BJ (cell line): ENCODE measurements at regions of chr22 and their contacts with region 1.

Region 1: GRCh38 chr22:41746567-41747400 is 47.5 kb downstream of the MEI1 start:
- DNase-seq: peak; percentile 38
- H3K4me3 ChIP-seq: no peak overlapping the region
- H3K27me3 ChIP-seq: peaks cover 16% of the 10 kb centered on the region
- CTCF ChIP-seq: peak; percentile 90

Region 2: DNA sequence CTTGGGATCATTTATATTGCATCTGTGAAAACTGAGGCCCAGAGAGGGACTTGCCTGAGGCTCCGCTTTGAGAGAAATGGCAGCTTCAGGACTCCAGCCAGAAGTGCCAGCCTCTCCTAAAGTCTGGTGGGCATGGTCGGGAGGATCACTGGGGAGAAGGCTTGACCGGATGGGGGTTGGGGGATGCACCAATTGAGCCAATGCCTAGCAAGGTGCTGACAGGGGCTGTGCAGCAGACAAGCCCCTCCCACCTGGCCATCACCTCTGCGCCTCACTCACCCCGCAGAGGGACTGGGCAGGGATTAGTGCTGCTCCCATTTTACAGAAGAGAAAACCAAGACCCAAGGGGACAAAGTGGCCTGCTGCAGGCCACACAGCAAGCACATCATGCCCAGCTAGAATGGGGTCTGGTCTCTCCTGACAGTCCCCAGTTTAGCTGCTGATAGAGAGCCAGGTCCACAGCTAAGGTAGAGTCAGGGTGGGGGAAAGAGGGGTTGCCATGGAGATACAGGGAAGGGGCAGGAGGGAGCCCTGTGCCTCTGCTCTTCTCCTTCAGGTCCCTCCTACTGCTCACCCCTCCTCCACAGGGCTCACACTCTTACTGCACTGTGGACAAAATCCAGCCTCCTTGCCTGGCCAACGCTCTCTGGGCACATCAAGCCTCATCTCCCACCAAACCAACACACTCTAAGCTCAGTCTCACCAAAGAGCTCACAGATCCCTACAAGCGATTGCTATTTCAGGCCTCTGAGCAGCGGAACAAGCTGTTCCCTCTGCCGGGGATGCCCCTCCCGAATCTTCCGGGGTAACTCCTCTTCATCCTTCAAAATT is 335.5 kb before region 1 on chr22:
- CTCF ChIA-PET with region 1: no interaction called
- POLR2A ChIA-PET with region 1: no interaction called
- DNase-seq: no peak
- H3K4me3 ChIP-seq: no peak overlapping the region
- H3K27me3 ChIP-seq: no peaks in the 10 kb centered on the region
- CTCF ChIP-seq: no peak

Region 3: DNA sequence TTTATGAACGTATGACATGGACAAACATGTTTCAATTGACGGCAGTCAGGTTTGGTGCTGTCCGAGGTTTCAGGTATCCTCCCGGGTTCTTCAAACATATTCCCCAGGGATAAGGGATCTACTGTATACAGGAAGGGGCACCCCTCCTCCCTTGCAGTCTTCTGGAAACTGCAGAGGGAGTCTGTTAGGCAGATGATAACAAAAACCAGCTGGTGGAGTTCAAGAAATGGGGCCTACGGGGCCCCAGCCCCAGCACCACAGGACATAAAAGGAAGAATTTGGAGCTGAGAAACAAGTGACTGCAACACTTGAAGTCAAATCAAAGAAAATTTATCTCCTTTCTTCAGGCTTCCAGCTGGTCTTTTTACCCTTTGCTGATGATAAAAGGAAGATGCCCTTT is 90.2 kb before region 1 on chr22:
- CTCF ChIA-PET with region 1: no interaction called
- POLR2A ChIA-PET with region 1: no interaction called
- DNase-seq: no peak
- H3K4me3 ChIP-seq: no peak overlapping the region
- H3K27me3 ChIP-seq: no peaks in the 10 kb centered on the region
- CTCF ChIP-seq: no peak

Region 4: DNA sequence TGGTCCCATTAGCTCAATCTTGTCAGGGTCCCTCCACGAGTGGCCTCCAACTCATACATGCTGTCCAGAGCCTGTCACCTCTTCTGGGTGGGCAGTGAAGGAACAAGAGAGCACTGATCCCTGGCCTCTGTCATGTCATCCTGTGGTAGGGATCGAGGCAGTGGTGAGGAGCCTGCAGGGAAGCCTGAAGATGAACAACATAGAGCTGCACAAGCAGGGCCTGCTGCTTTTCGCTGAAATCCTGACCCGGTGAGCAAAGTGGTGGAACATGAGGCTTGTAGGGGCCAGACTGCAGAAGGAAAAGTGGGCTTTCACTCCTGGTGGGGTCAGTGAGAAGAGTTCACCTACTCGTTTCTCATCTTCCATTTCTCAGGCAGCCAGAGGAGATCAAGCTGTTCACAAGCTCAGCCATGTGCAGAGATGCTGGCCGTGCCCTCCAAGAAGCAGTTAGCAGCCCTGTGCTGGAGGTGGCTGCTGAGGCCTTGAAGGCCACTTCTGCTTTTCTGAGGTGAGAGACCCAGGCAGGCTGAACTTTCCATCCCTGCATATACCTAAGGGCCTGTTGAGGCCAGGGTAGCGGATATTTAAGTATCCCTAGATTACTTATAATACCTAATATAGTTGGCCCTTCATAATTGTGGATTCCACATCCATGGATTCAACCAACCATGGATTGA is 14.6 kb before region 1 on chr22:
- CTCF ChIA-PET with region 1: interaction called, 12 read pairs
- POLR2A ChIA-PET with region 1: no interaction called
- DNase-seq: no peak
- H3K4me3 ChIP-seq: no peak overlapping the region
- H3K27me3 ChIP-seq: peaks cover 1% of the 10 kb centered on the region; the same call in 1 of the 2 replicates
- CTCF ChIP-seq: no peak

Region 5: GRCh38 chr22:41762980-41763779 is 16.4 kb after region 1 on chr22:
- CTCF ChIA-PET with region 1: interaction called, 10 read pairs
- POLR2A ChIA-PET with region 1: no interaction called
- DNase-seq: no peak
- H3K4me3 ChIP-seq: no peak overlapping the region
- H3K27me3 ChIP-seq: no peaks in the 10 kb centered on the region; the same call in 1 of the 2 replicates
- CTCF ChIP-seq: peak; percentile 34; the same call in 1 of the 2 replicates

Region 6: GRCh38 chr22:41857155-41857859 is 110.5 kb after region 1 on chr22:
- CTCF ChIA-PET with region 1: interaction called, 10 read pairs
- POLR2A ChIA-PET with region 1: no interaction called
- DNase-seq: no peak
- H3K4me3 ChIP-seq: no peak overlapping the region
- H3K27me3 ChIP-seq: no peaks in the 10 kb centered on the region
- CTCF ChIP-seq: peak; percentile 66

Region 7: DNA sequence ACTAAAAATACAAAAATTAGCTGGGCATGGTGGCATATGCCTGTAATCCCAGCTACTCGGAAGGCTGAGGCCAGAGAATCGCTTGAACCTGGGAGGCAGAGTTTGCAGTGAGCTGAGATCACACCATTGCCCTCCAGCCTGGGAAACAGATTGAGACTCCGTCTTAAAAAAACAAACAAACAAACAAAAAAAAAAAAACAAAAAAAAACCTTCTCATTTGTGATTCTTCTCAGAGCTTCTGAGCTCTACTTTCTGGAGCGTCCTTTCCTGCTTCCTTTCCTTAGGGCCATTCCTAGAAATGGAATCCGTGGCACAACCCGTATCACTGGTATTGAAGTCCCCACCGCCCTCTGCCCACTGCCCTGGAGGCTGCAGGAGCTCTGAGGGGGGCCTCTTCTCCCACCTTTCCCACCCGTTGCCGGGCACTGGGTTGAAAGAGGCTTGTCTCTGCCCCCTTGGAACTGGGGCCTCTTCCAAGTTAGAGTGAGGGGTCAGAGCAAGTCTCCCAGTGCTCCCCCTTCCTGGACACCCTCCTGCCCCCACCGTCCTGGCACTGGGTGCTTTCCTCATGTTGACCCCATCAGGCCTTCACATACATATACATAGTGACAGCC is 170.1 kb after region 1 on chr22:
- CTCF ChIA-PET with region 1: no interaction called
- POLR2A ChIA-PET with region 1: no interaction called
- DNase-seq: no peak
- H3K4me3 ChIP-seq: no peak overlapping the region
- H3K27me3 ChIP-seq: peaks cover 36% of the 10 kb centered on the region
- CTCF ChIP-seq: no peak

Region 8: GRCh38 chr22:41935509-41935908 is 188.7 kb after region 1 on chr22:
- CTCF ChIA-PET with region 1: interaction called, 40 read pairs
- POLR2A ChIA-PET with region 1: no interaction called
- DNase-seq: no peak
- H3K4me3 ChIP-seq: no peak overlapping the region
- H3K27me3 ChIP-seq: no peaks in the 10 kb centered on the region
- CTCF ChIP-seq: no peak